Common myeloid progenitor, CD34-positive (primary cell): ENCODE measurements at regions of chr5 and their contacts with region 1.

Region 1: DNA sequence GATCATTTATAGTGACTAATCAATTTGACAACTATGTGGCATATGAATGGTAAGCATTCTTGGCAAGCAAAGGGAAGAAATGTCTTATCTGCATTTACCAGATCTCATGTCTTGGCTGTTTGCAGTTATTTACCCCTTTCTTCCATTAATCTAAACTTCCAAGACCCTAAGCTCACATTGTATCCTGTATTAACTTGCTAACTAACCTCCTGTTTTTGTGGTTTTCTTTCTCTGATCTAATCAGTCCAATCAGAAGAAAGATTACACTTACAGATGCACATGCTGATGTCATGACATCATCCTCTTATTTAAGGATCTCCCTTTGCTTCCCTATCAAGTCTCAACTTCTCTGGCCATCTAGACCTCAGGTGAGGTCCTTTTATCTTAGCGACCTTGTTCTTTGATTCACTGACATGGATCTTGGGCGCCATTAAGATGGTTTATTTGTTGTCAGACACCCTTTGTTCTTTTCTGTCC is 95.5 kb downstream of the F2RL2 start:
- DNase-seq: peak; percentile 79 to 95 (median 90)
- H3K4me3 ChIP-seq: peak overlapping the region in 1 of 7 experiments; percentile 46
- H3K27ac ChIP-seq: peak overlapping the region; percentile 74 to 84
- H3K4me1 ChIP-seq: peaks cover 44 to 88% (median 64%) of the 10 kb centered on the region in 4 experiments
- H3K27me3 ChIP-seq: no peaks in the 10 kb centered on the region

Region 2: GRCh38 chr5:76514713-76515440 is 12.8 kb before region 1 on chr5:
- CTCF ChIA-PET with region 1: interaction called, 11 read pairs
- POLR2A ChIA-PET with region 1: no interaction called
- DNase-seq: no peak
- H3K4me3 ChIP-seq: no peak overlapping the region
- H3K27ac ChIP-seq: no peak overlapping the region
- H3K4me1 ChIP-seq: peaks cover 0 to 33% (median 7%) of the 10 kb centered on the region in 4 experiments
- H3K27me3 ChIP-seq: no peaks in the 10 kb centered on the region

Region 3: DNA sequence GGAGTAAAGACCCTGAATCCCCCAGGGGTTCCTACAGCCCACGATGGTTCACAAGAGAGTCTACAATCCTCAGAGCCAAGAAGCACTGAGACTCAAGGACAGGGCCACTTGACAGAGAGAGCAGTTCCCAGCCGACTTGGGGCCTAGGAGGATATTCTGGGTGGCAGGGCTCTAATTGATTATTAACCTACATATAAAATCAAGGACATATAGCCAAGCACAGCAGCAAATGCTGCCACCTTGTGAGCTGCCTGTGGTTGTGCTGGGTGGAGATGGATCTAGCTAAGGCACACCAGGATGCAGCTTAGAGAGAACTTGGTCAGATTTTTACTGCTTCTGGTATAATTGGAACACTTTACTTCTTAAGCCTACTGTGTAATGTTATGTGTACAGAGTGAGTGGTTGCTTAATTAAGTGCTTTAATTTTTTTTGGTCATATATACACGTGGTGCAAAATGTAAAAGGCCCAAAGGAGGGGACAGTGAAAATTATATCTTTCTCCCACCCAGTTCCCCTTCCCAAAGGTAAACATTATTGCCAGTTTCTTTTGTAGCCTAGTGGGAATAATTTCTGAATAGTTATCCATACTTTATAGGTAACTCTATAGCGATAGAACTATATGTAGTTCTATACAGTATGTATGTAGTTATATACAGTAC is 16.7 kb after region 1 on chr5:
- CTCF ChIA-PET with region 1: interaction called, 58 read pairs
- POLR2A ChIA-PET with region 1: interaction called, 36 read pairs
- DNase-seq: peak; percentile 83 to 88 (median 88)
- H3K4me3 ChIP-seq: peak overlapping the region in 5 of 7 experiments; percentile 11 to 62 (median 51)
- H3K27ac ChIP-seq: peak overlapping the region; percentile 90 to 93
- H3K4me1 ChIP-seq: peaks cover 53 to 100% (median 89%) of the 10 kb centered on the region in 4 experiments
- H3K27me3 ChIP-seq: no peaks in the 10 kb centered on the region

Region 4: GRCh38 chr5:76771705-76772405 is 244.1 kb after region 1 on chr5:
- CTCF ChIA-PET with region 1: no interaction called
- POLR2A ChIA-PET with region 1: no interaction called
- DNase-seq: no peak
- H3K4me3 ChIP-seq: no peak overlapping the region
- H3K27ac ChIP-seq: no peak overlapping the region
- H3K4me1 ChIP-seq: peaks cover 0 to 4% (median 0%) of the 10 kb centered on the region in 4 experiments
- H3K27me3 ChIP-seq: no peaks in the 10 kb centered on the region